MCF 10A (cell line): ENCODE measurements at regions of chr3 and their contacts with region 1.

Region 1: DNA sequence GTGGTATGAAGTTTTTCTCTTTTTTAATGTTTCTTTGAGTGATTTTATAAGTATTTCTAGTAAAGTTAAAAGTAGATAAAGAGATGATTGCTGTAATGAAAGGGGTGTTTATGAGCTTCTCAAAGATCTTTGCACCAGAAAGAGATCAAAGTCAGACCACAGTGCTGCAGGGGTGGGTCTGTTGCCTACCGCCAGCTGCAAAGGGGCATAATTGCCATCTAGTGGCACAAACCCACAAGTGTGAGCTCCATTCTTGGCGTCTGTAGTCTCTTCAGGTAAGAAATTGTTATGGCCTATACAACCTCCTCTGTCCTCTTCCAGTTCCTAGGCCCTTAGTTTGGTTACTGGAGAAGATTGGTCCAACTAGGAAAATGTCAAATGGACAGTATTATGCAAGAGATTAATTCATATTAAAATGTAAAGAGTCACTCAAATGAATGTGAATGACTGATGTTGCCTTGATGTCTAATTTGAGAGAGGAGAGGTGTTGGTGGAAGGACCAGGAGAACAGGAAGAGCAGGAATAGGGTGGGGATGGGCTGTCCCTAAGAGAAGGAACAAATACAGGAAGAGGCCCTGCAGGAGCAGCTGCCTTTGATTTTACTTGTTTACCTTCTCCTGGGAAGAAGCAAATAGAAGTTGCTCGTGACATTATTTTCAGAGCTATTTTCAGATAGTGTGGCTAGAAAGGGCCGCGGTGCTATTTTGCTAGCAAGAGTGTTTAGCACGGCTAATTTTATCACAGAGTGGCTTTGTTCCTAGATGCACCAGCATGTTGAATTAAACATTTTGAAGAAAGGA is 53.0 kb upstream of the GSK3B start:
- DNase-seq: peak; percentile 39
- H3K4me3 Mint-ChIP-seq: no peak overlapping the region
- H3K27ac Mint-ChIP-seq: peak overlapping the region; percentile 49
- H3K4me1 Mint-ChIP-seq: peaks cover 35% of the 10 kb centered on the region
- H3K27me3 Mint-ChIP-seq: no peaks in the 10 kb centered on the region
- CTCF ChIP-seq: peak; percentile 10

Region 2: DNA sequence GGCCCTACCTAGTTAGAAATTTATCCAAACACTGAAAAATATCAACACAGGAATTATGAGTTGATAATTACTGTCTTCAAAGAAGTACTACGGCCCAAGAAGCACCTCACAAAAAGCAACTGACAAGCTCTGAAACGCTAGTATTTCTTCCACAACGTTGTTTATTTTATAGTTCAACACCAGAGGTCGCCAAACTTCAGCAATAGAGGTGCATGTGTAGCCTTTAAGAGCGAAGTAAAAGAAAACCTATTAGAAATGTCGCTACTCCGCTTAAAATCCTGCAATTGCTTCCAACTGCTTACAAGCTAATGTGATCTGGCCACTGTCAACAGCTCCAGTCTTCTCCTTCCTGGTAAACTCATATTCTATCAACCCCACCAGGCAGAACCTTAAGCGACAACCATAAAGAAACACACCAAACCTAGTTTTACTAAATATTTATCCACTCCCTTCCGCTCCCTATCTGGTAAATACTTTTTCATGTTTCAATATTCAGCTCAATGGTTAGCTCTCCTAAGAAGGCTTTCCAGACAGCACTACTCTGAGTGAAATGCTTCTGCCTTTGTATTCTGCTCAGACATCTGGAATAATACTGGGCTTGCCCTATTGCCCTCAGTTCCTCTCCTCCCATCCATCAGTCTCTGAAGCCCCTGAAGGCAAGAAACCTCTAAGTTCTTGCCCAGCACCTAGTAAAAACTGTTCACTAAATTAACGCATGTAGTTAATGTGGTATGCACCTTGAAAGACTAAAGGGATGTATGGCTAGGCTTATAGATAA is 255.1 kb before region 1 on chr3:
- CTCF ChIA-PET with region 1: interaction called, 4 read pairs
- POLR2A ChIA-PET with region 1: no interaction called
- intact Hi-C with region 1: loop called (anchors 1 kb)
- DNase-seq: peak; percentile 75
- H3K4me3 Mint-ChIP-seq: no peak overlapping the region
- H3K27ac Mint-ChIP-seq: no peak overlapping the region
- H3K4me1 Mint-ChIP-seq: peaks cover 8% of the 10 kb centered on the region
- H3K27me3 Mint-ChIP-seq: no peaks in the 10 kb centered on the region
- CTCF ChIP-seq: peak; percentile 53

Region 3: DNA sequence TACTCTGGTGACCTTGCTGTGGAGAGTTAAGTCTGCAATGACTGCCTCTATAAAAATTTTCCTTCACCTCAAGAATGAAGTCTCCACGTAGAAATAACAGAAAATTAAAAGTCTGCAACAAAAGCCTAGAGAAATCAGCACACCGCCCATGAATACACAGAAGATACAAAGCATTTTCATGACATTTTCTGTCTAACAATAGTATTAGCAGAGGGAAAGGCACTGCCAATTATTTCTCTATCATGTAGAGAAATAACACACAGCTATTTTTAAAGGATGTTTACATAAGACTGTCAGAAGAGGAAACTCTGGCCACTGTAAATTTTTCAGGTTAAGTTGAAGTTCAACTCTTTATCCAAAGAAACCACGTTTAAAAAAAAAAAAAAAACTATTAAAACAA is 133.8 kb before region 1 on chr3:
- CTCF ChIA-PET with region 1: no interaction called
- POLR2A ChIA-PET with region 1: no interaction called
- intact Hi-C with region 1: no loop called
- DNase-seq: no peak
- H3K4me3 Mint-ChIP-seq: no peak overlapping the region
- H3K27ac Mint-ChIP-seq: no peak overlapping the region
- H3K4me1 Mint-ChIP-seq: peaks cover 15% of the 10 kb centered on the region
- H3K27me3 Mint-ChIP-seq: no peaks in the 10 kb centered on the region
- CTCF ChIP-seq: no peak

Region 4: DNA sequence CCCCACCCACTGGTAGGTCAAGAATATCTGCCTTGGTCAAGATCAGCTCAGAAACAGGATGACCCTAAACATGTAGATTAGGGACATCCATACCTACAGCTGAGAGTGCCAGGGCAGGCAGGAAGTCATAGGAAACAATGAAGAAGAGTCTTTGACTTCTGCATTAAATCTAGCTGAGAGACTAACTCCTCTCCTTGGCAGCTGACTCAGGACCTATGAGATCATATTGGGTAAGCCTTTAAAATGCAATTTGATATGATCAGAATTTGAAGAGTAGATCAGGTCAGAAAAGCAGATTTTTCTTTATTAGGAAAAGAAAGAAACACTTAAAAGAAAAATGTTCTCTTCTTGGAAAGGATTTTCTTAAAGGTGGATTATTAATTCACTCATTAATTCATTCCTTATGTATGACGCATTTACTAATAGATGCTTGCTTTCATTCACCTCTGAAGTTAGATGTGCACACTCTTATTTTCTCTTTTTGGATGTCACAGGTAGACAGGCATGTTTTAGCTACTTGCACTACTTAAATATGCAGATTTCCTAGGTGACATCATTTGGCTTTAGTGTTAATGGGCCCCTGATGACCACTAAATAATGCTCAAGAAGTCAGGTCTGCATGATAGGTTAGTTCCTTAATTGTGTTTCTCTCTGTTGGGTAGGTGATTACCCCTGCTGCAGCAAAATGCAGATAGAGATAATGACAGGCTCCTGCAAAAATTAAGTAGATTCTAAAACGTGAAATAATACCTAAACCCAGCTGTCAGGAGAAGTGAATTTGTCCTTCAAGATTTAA is 17.4 kb before region 1 on chr3:
- CTCF ChIA-PET with region 1: no interaction called
- POLR2A ChIA-PET with region 1: interaction called, 11 read pairs
- intact Hi-C with region 1: no loop called
- DNase-seq: no peak
- H3K4me3 Mint-ChIP-seq: no peak overlapping the region
- H3K27ac Mint-ChIP-seq: no peak overlapping the region
- H3K4me1 Mint-ChIP-seq: no peaks in the 10 kb centered on the region
- H3K27me3 Mint-ChIP-seq: no peaks in the 10 kb centered on the region
- CTCF ChIP-seq: no peak

Region 5: DNA sequence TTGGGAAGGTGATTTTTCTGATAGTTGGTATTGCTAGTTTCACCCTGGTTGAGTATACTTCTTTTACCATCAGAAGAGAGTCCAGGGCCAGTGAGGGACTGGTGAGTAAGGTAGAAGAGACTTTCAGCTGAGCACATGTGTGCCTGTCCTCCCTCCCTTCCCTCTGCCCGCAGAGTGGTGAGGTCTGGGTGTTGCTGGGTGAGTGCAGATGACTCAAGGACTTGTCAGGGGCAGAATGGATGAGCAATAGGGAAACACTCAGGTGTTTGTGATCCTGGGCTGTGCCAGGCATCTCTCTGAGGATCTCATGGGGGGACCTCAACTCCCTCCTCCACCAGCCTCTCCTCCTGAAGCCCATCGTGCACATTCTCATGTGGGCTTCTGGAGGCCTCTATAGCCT is 23.0 kb after region 1 on chr3:
- CTCF ChIA-PET with region 1: interaction called, 6 read pairs
- POLR2A ChIA-PET with region 1: interaction called, 21 read pairs
- intact Hi-C with region 1: loop called (anchors 2 kb)
- DNase-seq: peak; percentile 93
- H3K4me3 Mint-ChIP-seq: peak overlapping the region; percentile 13
- H3K27ac Mint-ChIP-seq: peak overlapping the region; percentile 75
- H3K4me1 Mint-ChIP-seq: peaks cover 33% of the 10 kb centered on the region
- H3K27me3 Mint-ChIP-seq: no peaks in the 10 kb centered on the region
- CTCF ChIP-seq: no peak

Region 6: DNA sequence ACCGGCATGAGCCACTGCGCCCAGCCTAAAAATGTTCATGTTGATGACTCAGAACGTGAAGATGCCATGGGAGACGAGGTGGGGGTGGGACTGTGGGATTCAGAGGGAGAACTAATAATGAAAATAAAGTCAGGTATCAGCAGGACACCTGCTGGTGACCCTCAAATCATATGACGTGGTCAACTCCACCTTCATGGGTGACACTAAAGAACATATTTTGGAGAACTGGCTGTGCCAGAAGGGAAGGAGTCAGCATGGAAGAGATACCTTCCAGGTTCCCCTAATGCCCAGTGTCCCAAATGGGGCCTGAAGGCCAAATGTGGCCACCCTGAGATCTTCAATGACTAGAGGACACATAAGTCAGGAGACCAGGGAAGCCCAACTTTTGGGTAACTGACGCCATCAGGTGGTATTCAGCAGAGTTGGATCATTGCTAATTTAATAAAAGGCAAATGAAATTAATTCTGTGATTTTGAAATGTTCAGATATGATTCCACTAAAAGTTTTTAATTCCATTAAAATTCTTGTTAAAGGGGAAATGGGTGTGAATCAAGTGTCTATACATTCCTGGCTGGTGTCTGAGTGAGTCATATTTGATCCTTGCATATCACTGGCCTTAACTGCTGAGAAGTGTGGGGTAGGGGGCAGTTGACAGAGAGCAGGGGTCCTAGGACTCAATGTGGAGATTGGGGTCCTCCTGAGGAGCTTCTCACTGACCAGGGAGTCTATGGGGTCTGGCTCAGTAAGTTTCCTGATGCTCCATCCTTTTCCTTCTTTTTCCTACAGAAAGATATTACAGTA is 35.7 kb after region 1 on chr3:
- CTCF ChIA-PET with region 1: interaction called, 10 read pairs
- POLR2A ChIA-PET with region 1: interaction called, 21 read pairs
- intact Hi-C with region 1: no loop called
- DNase-seq: peak; percentile 80
- H3K4me3 Mint-ChIP-seq: no peak overlapping the region
- H3K27ac Mint-ChIP-seq: peak overlapping the region; percentile 83
- H3K4me1 Mint-ChIP-seq: peaks cover 27% of the 10 kb centered on the region
- H3K27me3 Mint-ChIP-seq: no peaks in the 10 kb centered on the region
- CTCF ChIP-seq: peak; percentile 42